Esophagus squamous epithelium (tissue), 5 donors: ENCODE measurements at regions of chr1 and their contacts with region 1.

Region 1: DNA sequence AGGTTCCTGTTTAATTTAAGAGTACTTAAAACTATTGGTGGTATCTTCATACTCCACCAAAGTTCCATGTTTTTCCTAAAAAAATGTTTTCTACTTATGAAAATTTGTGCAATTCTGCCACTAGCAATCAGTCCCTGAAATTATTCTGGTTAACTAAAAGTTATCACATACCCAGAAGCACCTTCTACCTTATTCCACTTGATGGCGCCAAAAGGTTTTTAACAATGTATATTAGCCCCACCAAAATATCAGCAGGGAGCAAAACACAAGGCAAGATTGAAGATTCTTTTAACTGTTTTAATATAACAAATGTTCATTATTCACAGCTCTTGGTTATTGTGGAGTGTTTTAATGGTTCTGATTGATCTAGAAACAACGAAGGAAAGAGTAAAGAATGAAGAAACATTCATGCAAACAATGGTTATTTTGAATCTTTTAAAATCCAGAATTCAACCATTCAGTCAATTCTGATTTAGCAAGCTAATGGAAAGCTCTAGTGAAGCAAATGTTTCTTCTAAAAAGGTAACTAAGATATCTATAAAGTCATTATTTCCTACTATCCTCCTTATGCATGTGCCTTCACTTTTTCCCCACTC is 67.2 kb downstream of the TTLL7 start:
- DNase-seq: no peak
- H3K4me3 ChIP-seq: no peak overlapping the region
- H3K27ac ChIP-seq: no peak overlapping the region
- H3K4me1 ChIP-seq: peaks cover 0 to 15% (median 0%) of the 10 kb centered on the region in 3 donors
- H3K27me3 ChIP-seq: no peaks in the 10 kb centered on the region
- CTCF ChIP-seq: peak; percentile 41 to 79 (median 66)
- POLR2A ChIP-seq: no peak

Region 2: GRCh38 chr1:84122780-84123382 is 191.1 kb after region 1 on chr1:
- intact Hi-C with region 1: loop called (anchors 5 kb)
- DNase-seq: no peak
- H3K4me3 ChIP-seq: no peak overlapping the region
- H3K27ac ChIP-seq: no peak overlapping the region
- H3K4me1 ChIP-seq: no peaks in the 10 kb centered on the region
- H3K27me3 ChIP-seq: no peaks in the 10 kb centered on the region
- CTCF ChIP-seq: peak in 5 of 6 experiments; percentile 50 to 73 (median 60)
- POLR2A ChIP-seq: no peak

Region 3: GRCh38 chr1:84412316-84412942 is 480.7 kb after region 1 on chr1:
- intact Hi-C with region 1: loop called (anchors 10 kb)
- DNase-seq: no peak
- H3K4me3 ChIP-seq: no peak overlapping the region
- H3K27ac ChIP-seq: no peak overlapping the region
- H3K4me1 ChIP-seq: no peaks in the 10 kb centered on the region
- H3K27me3 ChIP-seq: no peaks in the 10 kb centered on the region
- CTCF ChIP-seq: no peak
- POLR2A ChIP-seq: no peak